PC-3 (cell line): ENCODE measurements at regions of chr17 and their contacts with region 1.

Region 1: DNA sequence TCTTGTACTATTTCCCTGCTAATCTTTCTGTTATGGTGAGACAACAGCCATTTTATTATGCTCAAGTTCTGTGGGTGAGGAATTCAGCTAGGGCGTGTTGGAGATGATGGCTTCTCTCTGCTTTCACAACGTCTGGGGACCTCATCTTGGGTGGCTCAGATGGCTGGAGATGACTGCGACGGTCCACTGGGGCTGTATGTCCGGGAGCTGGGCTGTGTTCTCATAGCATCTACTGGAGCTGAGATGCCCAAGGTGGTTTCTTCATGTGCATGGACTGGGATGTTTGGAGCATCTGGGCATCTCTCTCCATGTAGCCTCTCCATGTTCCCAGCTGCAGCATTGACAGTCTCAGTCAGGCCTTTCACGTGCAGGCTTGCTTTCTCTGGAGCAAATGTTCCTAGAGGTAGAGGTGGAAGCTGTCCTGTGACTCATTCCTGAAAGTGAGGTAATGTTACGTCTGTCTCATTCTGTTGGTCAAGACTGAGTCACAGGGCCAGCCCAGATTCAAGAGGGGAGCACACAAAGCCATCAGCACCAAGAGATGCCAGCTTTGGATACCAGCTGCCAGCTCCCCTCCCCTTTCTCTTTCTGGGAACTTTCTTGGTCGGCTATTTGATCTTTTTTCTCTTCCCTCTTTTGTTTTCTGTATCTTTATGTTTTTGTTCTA is 96.2 kb downstream of the RAP1GAP2 start:
- DNase-seq: peak; percentile 92
- ATAC-seq: peak; percentile 93
- H3K4me3 ChIP-seq: no peak overlapping the region
- H3K27ac ChIP-seq: peak overlapping the region; percentile 92
- H3K4me1 ChIP-seq: peaks cover 39% of the 10 kb centered on the region
- H3K27me3 ChIP-seq: no peaks in the 10 kb centered on the region
- CTCF ChIP-seq: no peak

Region 2: GRCh38 chr17:2711601-2712299 is 180.7 kb before region 1 on chr17 and contains the start of gene CLUH:
- CTCF ChIA-PET with region 1: no interaction called
- POLR2A ChIA-PET with region 1: no interaction called
- intact Hi-C with region 1: no loop called
- DNase-seq: peak; percentile 95
- ATAC-seq: peak; percentile 71
- H3K4me3 ChIP-seq: peak within 1 kb of the TSS; percentile 97
- H3K27ac ChIP-seq: peak within 1 kb of the TSS; percentile 56
- H3K4me1 ChIP-seq: peaks cover 20% of the 10 kb centered on the region
- H3K27me3 ChIP-seq: no peaks in the 10 kb centered on the region
- CTCF ChIP-seq: no peak
- total RNA-seq, gene CLUH: 108 and 148 TPM in 2 replicates

Region 3: DNA sequence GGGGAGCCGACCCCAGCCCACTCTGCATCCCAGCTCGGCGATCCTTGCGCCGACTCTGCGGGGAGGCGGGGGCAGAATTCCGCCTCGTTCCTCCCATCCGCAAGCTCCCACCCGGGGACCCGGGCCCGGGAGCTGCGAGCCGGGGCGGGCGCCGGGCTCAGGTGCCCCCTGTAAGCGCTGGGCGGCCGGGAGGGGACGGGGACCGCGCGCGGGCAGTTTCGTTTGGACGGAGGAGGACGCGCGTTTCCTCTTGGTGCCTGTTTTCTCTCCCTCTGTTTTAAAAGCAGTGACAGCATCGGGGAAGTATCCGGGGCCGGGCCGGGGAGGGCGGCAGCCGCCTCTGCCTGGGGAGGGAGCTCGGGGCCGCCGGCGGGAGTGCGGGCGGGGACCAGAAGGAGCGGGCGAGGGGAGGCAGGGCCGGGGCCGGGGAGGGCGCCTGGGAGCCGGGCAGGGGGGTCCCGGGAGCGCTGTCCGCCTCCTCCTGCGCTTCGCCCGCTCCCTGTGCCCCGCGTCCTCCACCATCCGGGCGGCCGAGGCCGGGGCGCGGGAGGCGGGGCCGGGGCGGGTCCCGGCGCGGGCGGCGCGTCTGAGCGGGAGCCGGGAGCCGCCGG is 39.2 kb before region 1 on chr17:
- CTCF ChIA-PET with region 1: no interaction called
- POLR2A ChIA-PET with region 1: no interaction called
- intact Hi-C with region 1: loop called (anchors 5 kb)
- DNase-seq: peak; percentile 45
- ATAC-seq: peak; percentile 54
- H3K4me3 ChIP-seq: peak overlapping the region; percentile 93
- H3K27ac ChIP-seq: no peak overlapping the region
- H3K4me1 ChIP-seq: no peaks in the 10 kb centered on the region; the same call in 1 of the 2 replicates
- H3K27me3 ChIP-seq: no peaks in the 10 kb centered on the region
- CTCF ChIP-seq: no peak